Naive thymus-derived CD4-positive, alpha-beta T cell (primary cell): ENCODE measurements at regions of chr5 and their contacts with region 1.

Region 1: DNA sequence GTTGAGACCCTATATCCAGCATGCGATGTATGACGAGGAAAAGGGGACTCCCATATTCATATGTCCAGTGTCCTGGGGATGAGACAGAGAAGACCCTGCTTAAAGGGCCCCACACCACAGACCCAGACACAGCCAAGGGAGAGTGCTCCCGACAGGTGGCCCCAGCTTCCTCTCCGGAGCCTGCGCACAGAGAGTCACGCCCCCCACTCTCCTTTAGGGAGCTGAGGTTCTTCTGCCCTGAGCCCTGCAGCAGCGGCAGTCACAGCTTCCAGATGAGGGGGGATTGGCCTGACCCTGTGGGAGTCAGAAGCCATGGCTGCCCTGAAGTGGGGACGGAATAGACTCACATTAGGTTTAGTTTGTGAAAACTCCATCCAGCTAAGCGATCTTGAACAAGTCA is 17.1 kb downstream of the BTNL3 start:
- DNase-seq: no peak
- ATAC-seq: no peak
- H3K4me3 ChIP-seq: no peak overlapping the region
- H3K4me3 Mint-ChIP-seq: no peak overlapping the region
- H3K27ac ChIP-seq: no peak overlapping the region
- H3K27ac Mint-ChIP-seq: no peak overlapping the region
- H3K4me1 ChIP-seq: no peaks in the 10 kb centered on the region
- H3K4me1 Mint-ChIP-seq: peaks cover 0 to 2% (median 0%) of the 10 kb centered on the region in 7 donors
- H3K27me3 ChIP-seq: no peaks in the 10 kb centered on the region
- H3K27me3 Mint-ChIP-seq: peaks cover 0 to 26% (median 5%) of the 10 kb centered on the region in 5 donors

Region 2: DNA sequence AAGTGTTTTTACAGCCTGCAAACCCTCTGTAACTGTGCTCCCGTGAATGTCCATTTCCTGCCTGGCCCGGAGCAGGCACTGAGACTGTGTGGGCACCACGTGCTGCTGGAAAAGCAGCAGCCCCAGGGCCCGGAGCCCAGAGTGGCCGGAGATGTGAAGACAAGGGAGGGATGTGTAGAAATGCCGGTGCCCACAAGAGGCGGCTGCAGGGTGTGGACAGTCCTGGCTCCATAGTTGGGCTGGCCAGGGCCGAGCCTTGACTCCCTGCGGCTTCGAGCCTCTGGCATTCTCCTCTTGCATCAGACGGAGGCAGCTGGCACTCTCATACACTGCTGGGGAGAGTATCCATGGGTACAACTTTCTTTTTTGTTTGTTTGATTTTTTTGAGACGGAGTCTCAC is 639.5 kb before region 1 on chr5:
- CTCF ChIA-PET with region 1: no interaction called
- POLR2A ChIA-PET with region 1: no interaction called
- intact Hi-C with region 1: no loop called
- DNase-seq: no peak
- ATAC-seq: no peak
- H3K4me3 ChIP-seq: no peak overlapping the region
- H3K4me3 Mint-ChIP-seq: no peak overlapping the region
- H3K27ac ChIP-seq: no peak overlapping the region
- H3K27ac Mint-ChIP-seq: no peak overlapping the region
- H3K4me1 ChIP-seq: peaks cover 0 to 17% of the 10 kb centered on the region in 2 donors
- H3K4me1 Mint-ChIP-seq: peaks cover 0 to 5% (median 0%) of the 10 kb centered on the region in 7 donors
- H3K27me3 ChIP-seq: no peaks in the 10 kb centered on the region
- H3K27me3 Mint-ChIP-seq: peaks cover 0 to 8% (median 0%) of the 10 kb centered on the region in 5 donors

Region 3: DNA sequence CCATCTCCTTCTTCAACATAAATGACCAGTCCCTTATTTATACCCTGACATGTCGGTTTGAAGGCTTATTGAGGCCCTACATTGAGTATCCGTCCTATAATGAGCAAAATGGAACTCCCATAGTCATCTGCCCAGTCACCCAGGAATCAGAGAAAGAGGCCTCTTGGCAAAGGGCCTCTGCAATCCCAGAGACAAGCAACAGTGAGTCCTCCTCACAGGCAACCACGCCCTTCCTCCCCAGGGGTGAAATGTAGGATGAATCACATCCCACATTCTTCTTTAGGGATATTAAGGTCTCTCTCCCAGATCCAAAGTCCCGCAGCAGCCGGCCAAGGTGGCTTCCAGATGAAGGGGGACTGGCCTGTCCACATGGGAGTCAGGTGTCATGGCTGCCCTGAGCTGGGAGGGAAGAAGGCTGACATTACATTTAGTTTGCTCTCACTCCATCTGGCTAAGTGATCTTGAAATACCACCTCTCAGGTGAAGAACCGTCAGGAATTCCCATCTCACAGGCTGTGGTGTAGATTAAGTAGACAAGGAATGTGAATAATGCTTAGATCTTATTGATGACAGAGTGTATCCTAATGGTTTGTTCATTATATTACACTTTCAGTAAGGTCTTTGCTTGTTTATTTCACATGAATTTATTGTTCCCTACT is 55.4 kb before region 1 on chr5:
- CTCF ChIA-PET with region 1: no interaction called
- POLR2A ChIA-PET with region 1: no interaction called
- intact Hi-C with region 1: loop called in 1 of 2 experiments (anchors 2 kb)
- DNase-seq: no peak
- ATAC-seq: no peak
- H3K4me3 ChIP-seq: no peak overlapping the region
- H3K4me3 Mint-ChIP-seq: no peak overlapping the region
- H3K27ac ChIP-seq: no peak overlapping the region
- H3K27ac Mint-ChIP-seq: no peak overlapping the region
- H3K4me1 ChIP-seq: no peaks in the 10 kb centered on the region
- H3K4me1 Mint-ChIP-seq: peaks cover 0 to 4% (median 0%) of the 10 kb centered on the region in 7 donors
- H3K27me3 ChIP-seq: no peaks in the 10 kb centered on the region
- H3K27me3 Mint-ChIP-seq: peaks cover 0 to 6% (median 3%) of the 10 kb centered on the region in 5 donors

Region 4: GRCh38 chr5:181052672-181053487 is 47.1 kb after region 1 on chr5:
- CTCF ChIA-PET with region 1: no interaction called
- POLR2A ChIA-PET with region 1: no interaction called
- intact Hi-C with region 1: no loop called
- DNase-seq: peak in 4 of 9 donors; percentile 9 to 16 (median 12)
- ATAC-seq: peak; percentile 23
- H3K4me3 ChIP-seq: peak overlapping the region; percentile 22
- H3K4me3 Mint-ChIP-seq: peak overlapping the region; percentile 75 to 92 (median 80)
- H3K27ac ChIP-seq: no peak overlapping the region
- H3K27ac Mint-ChIP-seq: no peak overlapping the region
- H3K4me1 ChIP-seq: peaks cover 4 to 8% of the 10 kb centered on the region in 2 donors
- H3K4me1 Mint-ChIP-seq: peaks cover 10 to 27% (median 21%) of the 10 kb centered on the region in 7 donors
- H3K27me3 ChIP-seq: peaks cover 0 to 18% of the 10 kb centered on the region in 2 donors
- H3K27me3 Mint-ChIP-seq: peaks cover 71 to 82% (median 79%) of the 10 kb centered on the region in 5 donors